ENCODE measurements at regions of chr10 and their contacts with region 1.

Region 1: GRCh38 chr10:31345886-31346285 is 26.9 kb downstream of the ZEB1 start:
- DNase-seq: no peak
- ATAC-seq: no peak
- H3K4me3 ChIP-seq: no peak overlapping the region
- H3K4me3 Mint-ChIP-seq: no peak overlapping the region
- H3K27ac ChIP-seq: no peak overlapping the region
- H3K27ac Mint-ChIP-seq: no peak overlapping the region
- H3K4me1 ChIP-seq: peaks cover 17 to 29% of the 10 kb centered on the region in 2 donors
- H3K4me1 Mint-ChIP-seq: peaks cover 44% of the 10 kb centered on the region
- H3K27me3 ChIP-seq: no peaks in the 10 kb centered on the region
- H3K27me3 Mint-ChIP-seq: no peaks in the 10 kb centered on the region
- CTCF ChIP-seq: no peak

Region 2: DNA sequence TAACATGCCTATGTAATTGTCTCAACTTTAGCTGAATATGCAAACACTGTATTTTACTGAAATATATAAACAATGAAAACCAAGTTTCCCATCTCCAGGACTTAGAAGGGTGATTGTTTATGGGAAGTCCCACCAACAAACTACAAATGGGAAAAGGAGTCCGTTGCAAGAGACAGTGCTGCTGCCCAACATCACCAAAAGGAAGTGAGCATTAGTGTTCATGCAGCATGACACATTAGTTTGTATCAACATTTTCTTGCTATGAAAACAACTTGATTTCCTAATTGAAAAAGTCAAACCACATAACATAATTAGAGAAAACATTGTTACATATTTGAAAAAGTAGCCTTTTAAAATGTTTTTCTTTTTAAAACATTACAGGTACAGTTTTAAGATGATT is 452.7 kb before region 1 on chr10:
- CTCF ChIA-PET with region 1: no interaction called
- POLR2A ChIA-PET with region 1: no interaction called
- intact Hi-C with region 1: no loop called
- DNase-seq: no peak
- ATAC-seq: no peak
- H3K4me3 ChIP-seq: no peak overlapping the region
- H3K4me3 Mint-ChIP-seq: no peak overlapping the region
- H3K27ac ChIP-seq: no peak overlapping the region
- H3K27ac Mint-ChIP-seq: no peak overlapping the region
- H3K4me1 ChIP-seq: no peaks in the 10 kb centered on the region
- H3K4me1 Mint-ChIP-seq: no peaks in the 10 kb centered on the region
- H3K27me3 ChIP-seq: no peaks in the 10 kb centered on the region
- H3K27me3 Mint-ChIP-seq: no peaks in the 10 kb centered on the region
- CTCF ChIP-seq: no peak

Region 3: GRCh38 chr10:31383810-31384588 is 38.1 kb after region 1 on chr10:
- CTCF ChIA-PET with region 1: no interaction called
- POLR2A ChIA-PET with region 1: no interaction called
- intact Hi-C with region 1: loop called (anchors 5 kb)
- DNase-seq: peak; percentile 49
- ATAC-seq: peak; percentile 68
- H3K4me3 ChIP-seq: peak overlapping the region in 1 of 5 experiments; percentile 6
- H3K4me3 Mint-ChIP-seq: peak overlapping the region; percentile 46
- H3K27ac ChIP-seq: no peak overlapping the region
- H3K27ac Mint-ChIP-seq: no peak overlapping the region
- H3K4me1 ChIP-seq: peaks cover 7% of the 10 kb centered on the region in 2 donors
- H3K4me1 Mint-ChIP-seq: peaks cover 24% of the 10 kb centered on the region
- H3K27me3 ChIP-seq: no peaks in the 10 kb centered on the region
- H3K27me3 Mint-ChIP-seq: no peaks in the 10 kb centered on the region
- CTCF ChIP-seq: no peak

Region 4: DNA sequence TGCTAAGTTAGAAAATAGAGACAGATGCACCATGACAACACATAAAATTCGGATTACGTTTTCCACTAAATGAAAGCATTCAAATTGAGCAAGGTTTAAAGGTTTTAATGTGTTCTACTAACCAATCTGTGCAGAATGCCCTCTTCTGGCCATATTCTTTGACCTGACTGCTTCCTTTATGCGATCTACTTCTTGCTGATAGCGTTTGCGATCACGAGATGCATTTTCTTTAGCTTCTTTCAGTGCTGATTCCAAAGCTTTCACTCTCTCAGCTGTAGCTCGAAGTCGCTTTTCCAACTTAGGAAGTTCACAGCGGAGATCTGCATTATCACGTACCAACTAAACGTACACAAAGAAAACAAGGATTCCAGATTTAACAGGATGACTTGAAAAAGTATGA is 671.1 kb after region 1 on chr10:
- CTCF ChIA-PET with region 1: no interaction called
- POLR2A ChIA-PET with region 1: no interaction called
- intact Hi-C with region 1: no loop called
- DNase-seq: no peak
- ATAC-seq: no peak
- H3K4me3 ChIP-seq: no peak overlapping the region
- H3K4me3 Mint-ChIP-seq: no peak overlapping the region
- H3K27ac ChIP-seq: no peak overlapping the region
- H3K27ac Mint-ChIP-seq: no peak overlapping the region
- H3K4me1 ChIP-seq: no peaks in the 10 kb centered on the region
- H3K4me1 Mint-ChIP-seq: peaks cover 2% of the 10 kb centered on the region
- H3K27me3 ChIP-seq: no peaks in the 10 kb centered on the region
- H3K27me3 Mint-ChIP-seq: no peaks in the 10 kb centered on the region
- CTCF ChIP-seq: no peak